Heart right ventricle (tissue), 16 donors: ENCODE measurements at regions of chr7 and their contacts with region 1.

Region 1: GRCh38 chr7:50595491-50596102 is 30.4 kb upstream of the DDC start:
- DNase-seq: peak in 1 of 2 donors; percentile 29
- ATAC-seq: peak in 6 of 8 donors; percentile 44 to 67 (median 61)
- H3K4me3 ChIP-seq: no peak overlapping the region
- H3K27ac ChIP-seq: no peak overlapping the region
- H3K4me1 ChIP-seq: no peaks in the 10 kb centered on the region
- H3K27me3 ChIP-seq: no peaks in the 10 kb centered on the region
- CTCF ChIP-seq: peak in 7 of 9 donors; percentile 17 to 53 (median 33)

Region 2: GRCh38 chr7:50268223-50268622 is 327.4 kb before region 1 on chr7:
- intact Hi-C with region 1: no loop called
- DNase-seq: no peak
- ATAC-seq: no peak
- H3K4me3 ChIP-seq: no peak overlapping the region
- H3K27ac ChIP-seq: peak overlapping the region in 1 of 10 donors; percentile 74
- H3K4me1 ChIP-seq: peaks cover 0 to 57% (median 0%) of the 10 kb centered on the region in 9 donors
- H3K27me3 ChIP-seq: peaks cover 0 to 13% (median 0%) of the 10 kb centered on the region in 7 donors
- CTCF ChIP-seq: no peak

Region 3: DNA sequence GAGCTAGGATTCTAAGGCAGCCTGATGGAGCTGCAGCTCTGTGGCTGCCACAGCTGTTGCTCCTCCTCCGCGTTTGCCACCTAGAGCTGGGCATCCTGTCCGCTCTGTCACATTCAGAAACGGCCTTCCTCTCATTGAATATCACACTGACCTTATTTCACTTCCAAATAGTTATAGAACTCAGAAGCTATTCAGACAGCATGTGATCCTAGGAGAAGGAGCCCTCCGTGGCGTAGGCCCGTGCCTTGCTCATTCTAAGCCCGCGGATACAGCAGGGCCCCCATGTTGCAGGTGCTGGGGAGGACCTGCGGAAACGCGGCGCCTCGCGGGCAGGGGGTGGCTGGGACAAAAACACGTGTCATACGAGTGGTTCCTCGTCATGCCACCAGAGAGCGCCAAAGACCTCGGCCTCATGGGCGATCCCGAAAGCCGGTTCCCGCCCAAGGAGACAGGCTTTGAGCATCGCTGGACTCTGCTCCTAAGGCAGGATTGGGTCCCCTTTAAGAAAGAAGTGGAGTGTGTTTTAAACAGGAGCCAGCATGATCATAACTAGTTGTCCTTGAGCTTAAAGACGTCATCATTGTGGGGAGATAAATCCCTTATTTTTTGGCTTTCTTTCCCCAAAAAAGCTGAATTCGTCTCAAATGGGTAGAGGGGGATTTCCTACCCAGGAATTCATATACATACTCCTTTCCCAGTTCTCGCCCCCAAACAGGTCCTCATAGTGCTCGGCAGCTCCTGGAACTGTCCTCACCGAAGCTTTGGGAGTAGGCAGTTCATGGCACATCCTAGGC is 127.6 kb before region 1 on chr7:
- intact Hi-C with region 1: loop called in 7 of 10 experiments (anchors 10 kb)
- DNase-seq: peak; percentile 80 to 83
- ATAC-seq: peak; percentile 77 to 95 (median 93)
- H3K4me3 ChIP-seq: peak overlapping the region in 2 of 10 donors; percentile 20 to 21
- H3K27ac ChIP-seq: no peak overlapping the region
- H3K4me1 ChIP-seq: peaks cover 0 to 10% (median 0%) of the 10 kb centered on the region in 9 donors
- H3K27me3 ChIP-seq: peaks cover 0 to 7% (median 0%) of the 10 kb centered on the region in 7 donors
- CTCF ChIP-seq: peak; percentile 88 to 95 (median 91)

Region 4: DNA sequence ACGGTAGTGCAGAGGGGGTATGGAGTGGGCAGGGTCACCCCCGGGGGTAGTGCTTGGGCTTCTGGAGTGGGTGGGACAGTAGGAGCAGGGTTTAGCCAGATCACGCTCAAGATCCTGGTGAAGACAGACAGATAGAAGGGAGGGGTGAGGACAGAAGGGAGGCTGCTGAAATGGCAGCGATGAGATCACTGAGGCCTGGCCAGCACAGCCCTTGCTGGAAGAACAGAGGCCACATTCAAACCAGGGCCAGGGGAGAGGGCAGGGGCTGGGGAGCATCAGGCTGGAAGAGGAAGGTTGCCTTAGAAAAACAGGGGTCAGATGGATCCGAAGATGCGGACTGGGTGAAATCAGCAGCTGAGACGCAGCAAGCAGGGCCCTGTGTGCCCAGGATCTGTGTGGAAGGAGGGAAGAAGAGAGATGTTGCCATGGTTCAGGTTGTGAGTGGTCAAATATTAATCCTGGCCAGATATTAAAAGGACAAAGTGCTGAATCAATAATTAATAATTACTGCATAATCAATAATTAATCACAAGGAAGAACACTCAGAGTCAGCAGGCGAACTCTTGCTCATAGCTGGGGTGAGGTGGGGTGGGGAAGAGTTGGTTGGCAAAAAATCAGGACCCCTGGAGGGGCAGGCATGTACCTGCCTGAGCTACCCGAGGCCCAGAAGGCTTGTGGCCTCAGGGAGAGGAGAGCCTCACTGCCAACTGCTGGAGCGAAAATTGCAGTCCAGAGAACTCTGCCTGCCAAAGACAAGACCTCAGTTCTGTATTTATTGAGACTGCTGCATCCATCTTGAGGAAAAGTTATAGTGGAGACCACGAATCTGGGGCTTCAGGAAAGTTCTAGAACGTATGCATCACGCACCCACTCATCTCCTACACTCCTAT is 81.4 kb after region 1 on chr7:
- intact Hi-C with region 1: no loop called
- DNase-seq: no peak
- ATAC-seq: peak in 5 of 8 donors; percentile 17 to 52 (median 33)
- H3K4me3 ChIP-seq: no peak overlapping the region
- H3K27ac ChIP-seq: peak overlapping the region in 4 of 10 donors; percentile 16 to 45 (median 32)
- H3K4me1 ChIP-seq: peaks cover 10 to 73% (median 40%) of the 10 kb centered on the region in 9 donors
- H3K27me3 ChIP-seq: no peaks in the 10 kb centered on the region
- CTCF ChIP-seq: peak in 1 of 9 donors; percentile 14